SK-N-SH (cell line): ENCODE measurements at regions of chr4 and their contacts with region 1.

Region 1: GRCh38 chr4:151117371-151117962 is 18.0 kb downstream of the RPS3A start:
- DNase-seq: peak; percentile 65
- H3K4me3 ChIP-seq: no peak overlapping the region; a peak in 1 of 4 replicates
- H3K27ac ChIP-seq: no peak overlapping the region
- H3K4me1 ChIP-seq: no peaks in the 10 kb centered on the region
- H3K27me3 ChIP-seq: no peaks in the 10 kb centered on the region
- CTCF ChIP-seq: peak; percentile 85
- EP300 ChIP-seq: no peak
- RAD21 ChIP-seq: peak; percentile 92

Region 2: GRCh38 chr4:151015459-151016347 is 101.8 kb before region 1 on chr4:
- CTCF ChIA-PET with region 1: no interaction called
- POLR2A ChIA-PET with region 1: no interaction called
- DNase-seq: peak; percentile 94
- H3K4me3 ChIP-seq: peak overlapping the region; percentile 82 to 85
- H3K27ac ChIP-seq: peak overlapping the region; percentile 76 to 88
- H3K4me1 ChIP-seq: peaks cover 6 to 12% of the 10 kb centered on the region in 2 experiments; a peak in 3 of 4 replicates
- H3K27me3 ChIP-seq: no peaks in the 10 kb centered on the region
- CTCF ChIP-seq: no peak
- EP300 ChIP-seq: no peak
- RAD21 ChIP-seq: no peak

Region 3: GRCh38 chr4:151105454-151106032 is 11.9 kb before region 1 on chr4:
- CTCF ChIA-PET with region 1: interaction called, 22 read pairs
- POLR2A ChIA-PET with region 1: interaction called, 5 read pairs
- DNase-seq: no peak
- H3K4me3 ChIP-seq: no peak overlapping the region
- H3K27ac ChIP-seq: no peak overlapping the region
- H3K4me1 ChIP-seq: peaks cover 6 to 7% of the 10 kb centered on the region in 2 experiments; a peak in 2 of 4 replicates
- H3K27me3 ChIP-seq: no peaks in the 10 kb centered on the region
- CTCF ChIP-seq: no peak
- EP300 ChIP-seq: no peak
- RAD21 ChIP-seq: no peak

Region 4: DNA sequence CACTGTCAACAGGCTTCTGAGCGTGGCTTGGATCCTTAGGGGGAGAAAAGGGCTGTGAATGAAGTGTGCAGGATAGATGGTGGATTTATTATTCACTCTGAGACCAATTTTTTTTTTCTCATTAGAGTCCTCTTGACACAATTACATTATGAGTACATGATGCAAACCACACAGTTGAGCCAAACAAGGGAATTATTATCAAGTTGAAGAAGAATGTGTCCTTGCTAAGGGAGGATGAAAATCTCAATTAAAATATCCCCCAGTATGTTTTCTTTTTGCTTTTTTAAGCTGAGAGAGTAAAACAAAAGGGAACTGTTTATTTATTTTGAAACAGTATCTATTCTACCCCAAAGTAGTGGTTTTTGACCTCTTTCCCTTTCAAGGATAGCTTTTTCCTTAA is 22.3 kb after region 1 on chr4:
- CTCF ChIA-PET with region 1: interaction called, 13 read pairs
- POLR2A ChIA-PET with region 1: no interaction called
- DNase-seq: no peak
- H3K4me3 ChIP-seq: no peak overlapping the region
- H3K27ac ChIP-seq: no peak overlapping the region
- H3K4me1 ChIP-seq: no peaks in the 10 kb centered on the region
- H3K27me3 ChIP-seq: no peaks in the 10 kb centered on the region
- CTCF ChIP-seq: no peak
- EP300 ChIP-seq: no peak
- RAD21 ChIP-seq: no peak

Region 5: DNA sequence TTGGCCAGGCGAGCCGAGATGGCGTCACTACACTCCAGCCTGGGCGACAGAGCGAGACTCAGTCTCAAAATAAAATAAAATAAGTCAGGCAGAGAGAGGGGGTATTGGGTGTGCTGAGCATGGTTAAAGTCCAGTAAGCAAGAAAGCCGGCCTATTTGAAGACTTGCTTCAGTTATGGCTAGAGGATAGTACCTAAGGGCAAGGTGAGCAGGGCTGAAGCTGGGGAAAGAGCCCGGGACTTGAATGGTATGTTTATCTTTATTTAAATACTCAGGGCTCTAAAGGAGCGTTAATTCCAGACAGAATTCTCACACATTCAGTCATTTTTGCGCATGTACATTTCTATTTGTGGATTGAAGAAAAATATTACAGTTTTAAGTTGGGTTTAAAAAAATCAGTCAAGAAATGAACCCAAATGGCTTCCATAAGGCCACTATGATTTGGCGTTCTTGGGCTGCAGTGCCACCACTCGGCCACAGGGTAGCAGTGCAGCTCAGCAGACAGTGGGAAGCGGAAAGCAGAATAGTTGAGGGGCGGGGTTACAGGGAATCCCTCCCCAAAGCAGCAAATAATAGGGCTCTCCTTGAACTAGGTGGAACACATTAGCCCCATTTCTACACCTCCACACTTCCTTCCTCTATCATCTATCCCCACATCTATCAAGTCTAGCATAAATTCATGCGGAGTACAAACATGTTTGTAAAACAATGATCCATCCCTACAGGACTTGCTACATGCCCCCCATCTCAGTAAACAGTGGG is 245.1 kb after region 1 on chr4:
- CTCF ChIA-PET with region 1: interaction called, 18 read pairs
- POLR2A ChIA-PET with region 1: no interaction called
- DNase-seq: peak; percentile 83
- H3K4me3 ChIP-seq: peak overlapping the region in 1 of 2 experiments; percentile 46; a peak in 1 of 4 replicates
- H3K27ac ChIP-seq: no peak overlapping the region
- H3K4me1 ChIP-seq: peaks cover 0 to 5% of the 10 kb centered on the region in 2 experiments; a peak in 1 of 4 replicates
- H3K27me3 ChIP-seq: no peaks in the 10 kb centered on the region
- CTCF ChIP-seq: peak; percentile 99
- EP300 ChIP-seq: no peak
- RAD21 ChIP-seq: peak; percentile 100